WTC11 (cell line): ENCODE measurements at regions of chr3 and their contacts with region 1.

Region 1: DNA sequence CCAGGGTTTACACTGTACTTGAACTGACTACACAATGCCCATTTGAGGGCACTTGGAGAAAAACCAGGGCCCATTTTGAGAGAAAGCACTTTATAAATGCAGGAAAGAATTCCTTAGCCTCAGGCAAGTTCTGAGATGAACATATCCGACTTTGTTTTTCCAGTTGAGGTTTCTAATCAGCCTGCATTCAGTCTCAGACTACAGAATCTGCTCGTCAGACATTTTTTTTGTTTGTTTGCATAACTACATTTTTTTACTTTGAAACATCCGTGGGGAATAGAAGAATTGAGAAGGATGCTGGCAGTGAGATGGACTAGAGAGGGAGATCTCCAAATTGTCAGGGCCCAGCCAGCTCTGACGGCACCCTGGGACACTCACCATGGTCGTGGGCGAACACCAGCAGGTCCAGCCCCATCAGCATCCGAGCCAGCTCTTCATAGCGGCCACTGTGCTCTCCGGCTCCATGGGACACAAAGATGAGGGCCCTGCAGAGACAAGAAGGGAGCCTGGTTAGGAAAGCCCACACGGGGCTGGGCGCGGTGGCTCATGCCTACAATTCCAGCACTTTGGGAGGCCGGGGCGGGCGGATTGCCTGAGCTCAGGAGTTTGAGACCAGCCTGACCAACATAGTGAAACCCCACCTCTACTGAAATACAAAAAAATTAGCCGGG is 40.8 kb downstream of the MGLL start:
- DNase-seq: no peak
- ATAC-seq: no peak
- H3K4me3 Mint-ChIP-seq: no peak overlapping the region
- H3K27ac Mint-ChIP-seq: peak overlapping the region; percentile 62; the same call in 1 of the 2 replicates
- H3K4me1 Mint-ChIP-seq: peaks cover 7% of the 10 kb centered on the region
- H3K27me3 Mint-ChIP-seq: no peaks in the 10 kb centered on the region
- CTCF ChIP-seq: no peak

Region 2: GRCh38 chr3:127036209-127037020 is 745.1 kb before region 1 on chr3:
- CTCF ChIA-PET with region 1: no interaction called
- POLR2A ChIA-PET with region 1: interaction called, 11 read pairs
- DNase-seq: no peak
- ATAC-seq: no peak
- H3K4me3 Mint-ChIP-seq: no peak overlapping the region
- H3K27ac Mint-ChIP-seq: no peak overlapping the region
- H3K4me1 Mint-ChIP-seq: no peaks in the 10 kb centered on the region
- H3K27me3 Mint-ChIP-seq: no peaks in the 10 kb centered on the region
- CTCF ChIP-seq: no peak